ENCODE measurements at regions of chr14 and their contacts with region 1.

Region 1: DNA sequence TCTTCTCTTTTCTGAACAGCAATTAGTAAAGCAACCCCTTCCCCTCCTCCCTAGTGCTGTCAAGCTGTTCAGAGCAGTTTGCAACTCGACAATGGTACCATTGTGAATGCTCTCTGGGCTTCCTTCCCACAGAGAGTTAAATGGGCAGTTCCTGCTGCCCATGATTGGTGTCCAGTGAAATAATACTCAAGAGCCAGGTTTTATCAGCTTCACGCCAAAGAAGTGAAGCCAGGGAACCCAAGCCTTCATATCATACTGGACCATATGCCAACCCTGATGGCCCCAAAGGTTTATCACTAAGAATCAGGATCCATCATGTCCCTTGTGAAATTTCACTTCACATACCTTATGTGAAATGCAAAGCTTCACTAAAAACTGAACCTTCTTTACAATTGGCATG is 24.7 kb downstream of the INSM2 start:
- DNase-seq: no peak
- H3K4me3 ChIP-seq: no peak overlapping the region
- H3K27ac ChIP-seq: no peak overlapping the region
- H3K4me1 ChIP-seq: peaks cover 3% of the 10 kb centered on the region
- H3K27me3 ChIP-seq: no peaks in the 10 kb centered on the region
- CTCF ChIP-seq: no peak
- POLR2A ChIP-seq: no peak

Region 2: DNA sequence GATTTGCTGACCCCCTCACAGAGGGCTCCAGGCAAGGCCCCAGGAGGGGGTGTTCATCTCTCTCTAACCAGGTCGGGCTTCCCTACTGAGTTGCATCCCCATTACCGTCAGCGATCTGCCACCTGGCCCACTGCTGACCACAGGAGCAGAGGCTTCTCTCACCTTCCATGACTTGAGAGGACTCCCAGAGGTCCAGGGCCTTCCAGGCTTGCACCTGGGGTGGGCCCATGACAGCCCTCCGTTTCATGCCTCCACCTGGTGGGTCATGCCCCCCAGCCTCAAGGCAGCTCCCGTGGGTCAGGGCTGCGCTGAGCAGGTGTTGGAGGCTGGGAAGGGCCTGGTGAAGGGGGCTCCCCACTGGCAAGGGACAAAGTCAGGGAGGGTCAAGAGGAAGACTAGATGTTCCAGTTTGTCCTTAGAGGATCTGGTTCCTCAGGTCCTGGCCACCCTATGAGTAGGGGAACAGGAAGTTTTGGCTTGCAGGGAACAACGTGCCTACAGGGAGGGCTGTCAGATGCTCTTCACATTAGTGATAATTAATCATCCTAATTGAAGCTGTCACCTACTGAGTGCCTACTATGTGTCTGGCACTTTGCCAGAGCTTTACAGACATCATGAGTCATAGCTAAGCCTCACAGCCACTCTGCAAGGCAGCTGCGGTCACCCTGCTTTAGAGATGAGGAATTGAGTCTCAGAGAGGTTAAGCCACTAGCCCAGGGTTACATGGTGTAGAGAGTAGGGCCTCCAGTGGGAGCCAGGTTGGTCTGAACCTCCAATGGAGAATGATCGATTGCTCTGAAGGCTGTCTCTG is 167.9 kb before region 1 on chr14:
- CTCF ChIA-PET with region 1: no interaction called
- POLR2A ChIA-PET with region 1: no interaction called
- dilution Hi-C with region 1: no loop called
- intact Hi-C with region 1: no loop called
- DNase-seq: no peak
- H3K4me3 ChIP-seq: no peak overlapping the region
- H3K27ac ChIP-seq: no peak overlapping the region
- H3K4me1 ChIP-seq: peaks cover 1% of the 10 kb centered on the region
- H3K27me3 ChIP-seq: no peaks in the 10 kb centered on the region
- CTCF ChIP-seq: no peak
- POLR2A ChIP-seq: no peak

Region 3: GRCh38 chr14:35927727-35928304 is 369.1 kb after region 1 on chr14:
- CTCF ChIA-PET with region 1: no interaction called
- POLR2A ChIA-PET with region 1: no interaction called
- dilution Hi-C with region 1: no loop called
- intact Hi-C with region 1: loop called (anchors 5 kb)
- DNase-seq: no peak
- H3K4me3 ChIP-seq: no peak overlapping the region
- H3K27ac ChIP-seq: no peak overlapping the region
- H3K4me1 ChIP-seq: no peaks in the 10 kb centered on the region
- H3K27me3 ChIP-seq: peaks cover 0 to 1% of the 10 kb centered on the region in 2 experiments
- CTCF ChIP-seq: no peak
- POLR2A ChIP-seq: no peak